ENCODE measurements at regions of chr14 and their contacts with region 1.

Region 1: DNA sequence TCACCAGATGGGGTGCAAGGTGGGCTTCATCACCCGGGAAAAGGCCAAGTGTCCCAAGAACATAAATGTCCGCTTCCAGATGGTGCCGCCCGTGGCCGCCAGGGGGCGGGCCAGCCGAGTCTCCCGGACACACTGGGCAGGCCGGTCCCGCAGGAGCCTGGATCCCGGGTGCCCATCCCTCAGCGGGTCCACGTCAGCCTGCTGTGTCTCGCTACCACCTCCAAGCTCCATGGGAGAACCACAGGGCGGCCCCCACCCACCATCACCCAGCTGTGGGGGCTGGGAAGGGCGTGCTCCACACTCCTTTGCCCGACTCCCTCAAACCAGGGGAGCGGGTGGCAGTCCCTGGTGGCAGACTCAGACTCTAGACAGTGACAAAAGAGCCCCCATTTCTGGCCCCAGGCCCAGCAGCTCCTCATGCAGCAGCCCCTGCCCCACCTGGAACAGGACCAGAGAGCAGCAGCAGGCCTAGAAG is 22.0 kb upstream of the NUDT14 start:
- H3K4me3 ChIP-seq: no peak overlapping the region
- H3K27ac ChIP-seq: no peak overlapping the region
- H3K4me1 ChIP-seq: no peaks in the 10 kb centered on the region
- CTCF ChIP-seq: peak; percentile 90

Region 2: GRCh38 chr14:105351920-105352851 is 149.1 kb after region 1 on chr14:
- CTCF ChIA-PET with region 1: interaction called, 23 read pairs
- POLR2A ChIA-PET with region 1: no interaction called
- H3K4me3 ChIP-seq: no peak overlapping the region
- H3K27ac ChIP-seq: no peak overlapping the region
- H3K4me1 ChIP-seq: no peaks in the 10 kb centered on the region
- CTCF ChIP-seq: peak; percentile 86

Measured in HEK293 (cell line).